ENCODE measurements at regions of chr21 and their contacts with region 1.

Region 1: DNA sequence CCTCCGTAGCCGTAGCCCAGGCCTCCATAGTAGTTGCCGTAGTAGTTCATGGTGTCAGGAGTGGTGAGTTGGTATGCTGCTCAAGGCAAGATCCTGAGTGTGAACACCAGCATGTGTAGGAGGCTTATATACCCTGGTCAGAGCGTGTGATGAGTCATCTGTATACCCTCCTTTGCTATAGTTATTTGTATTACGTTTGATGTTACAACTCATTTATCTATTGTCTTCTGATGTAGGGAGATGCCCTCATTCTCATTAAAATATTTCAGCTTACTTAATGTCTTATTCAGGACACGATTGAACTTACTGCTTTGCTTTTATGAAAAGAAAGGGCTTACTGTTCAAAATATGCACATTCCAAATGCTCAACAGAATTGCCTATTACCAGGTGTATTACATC is at the start of gene KRTAP19-5:
- DNase-seq: no peak
- ATAC-seq: no peak
- H3K4me3 ChIP-seq: no peak within 1 kb of the TSS
- H3K27ac ChIP-seq: no peak within 1 kb of the TSS
- H3K4me1 ChIP-seq: no peaks in the 10 kb centered on the region
- H3K27me3 ChIP-seq: no peaks in the 10 kb centered on the region
- CTCF ChIP-seq: no peak
- EP300 ChIP-seq: no peak
- POLR2A ChIP-seq: no peak
- RAD21 ChIP-seq: no peak
- polyA plus RNA-seq, gene KRTAP19-5: not detected

Region 2: DNA sequence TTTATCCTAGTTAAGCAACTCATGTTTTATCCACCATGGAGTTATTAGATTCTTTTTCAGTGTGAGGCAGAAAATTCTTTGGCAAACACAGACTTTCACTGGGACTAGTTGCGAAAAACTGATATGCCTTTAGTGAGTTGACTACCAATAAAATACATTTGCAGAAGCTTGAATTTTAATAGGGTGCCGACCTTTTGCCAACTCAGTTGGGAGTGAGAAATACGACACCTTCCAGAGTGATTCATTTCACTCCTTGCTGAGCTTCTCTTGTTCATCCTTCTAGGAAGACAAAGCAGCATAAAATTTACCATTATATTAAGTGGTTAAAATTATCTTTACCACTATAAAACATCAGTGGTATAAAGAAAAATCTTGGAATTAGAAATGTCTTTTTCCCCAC is 152.5 kb before region 1 on chr21:
- CTCF ChIA-PET with region 1: no interaction called
- POLR2A ChIA-PET with region 1: no interaction called
- RAD21 ChIA-PET with region 1: no interaction called
- SMC1A ChIA-PET with region 1: no interaction called
- in situ Hi-C with region 1: no loop called
- intact Hi-C with region 1: no loop called
- DNase-seq: no peak
- ATAC-seq: no peak
- H3K4me3 ChIP-seq: no peak overlapping the region
- H3K27ac ChIP-seq: no peak overlapping the region
- H3K4me1 ChIP-seq: no peaks in the 10 kb centered on the region
- H3K27me3 ChIP-seq: no peaks in the 10 kb centered on the region
- CTCF ChIP-seq: no peak
- EP300 ChIP-seq: no peak
- POLR2A ChIP-seq: no peak
- RAD21 ChIP-seq: no peak

Region 3: DNA sequence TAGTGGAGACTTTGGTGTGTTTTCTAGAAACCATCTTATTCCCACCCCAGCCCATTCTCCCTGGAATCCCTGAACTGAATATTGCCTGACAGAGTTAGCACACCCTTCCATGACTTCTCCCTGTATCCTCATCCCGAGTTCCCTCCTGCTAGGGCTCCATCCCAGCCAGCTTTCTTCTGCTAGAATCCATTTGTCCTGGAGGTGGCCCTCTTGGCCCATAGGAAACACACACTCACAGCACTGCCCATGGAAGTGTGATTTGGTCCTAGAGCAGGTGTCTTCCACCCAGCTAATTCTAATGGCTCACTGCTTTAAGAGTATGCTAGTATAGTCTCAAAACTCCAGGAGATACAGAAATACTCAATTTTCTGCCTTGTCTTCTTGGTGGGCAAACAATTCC is 57.8 kb before region 1 on chr21:
- CTCF ChIA-PET with region 1: no interaction called
- POLR2A ChIA-PET with region 1: no interaction called
- RAD21 ChIA-PET with region 1: no interaction called
- SMC1A ChIA-PET with region 1: no interaction called
- in situ Hi-C with region 1: no loop called
- intact Hi-C with region 1: loop called (anchors 10 kb)
- DNase-seq: no peak
- ATAC-seq: no peak
- H3K4me3 ChIP-seq: no peak overlapping the region
- H3K27ac ChIP-seq: no peak overlapping the region
- H3K4me1 ChIP-seq: no peaks in the 10 kb centered on the region
- H3K27me3 ChIP-seq: no peaks in the 10 kb centered on the region
- CTCF ChIP-seq: no peak
- EP300 ChIP-seq: no peak
- POLR2A ChIP-seq: no peak
- RAD21 ChIP-seq: no peak

Region 4: GRCh38 chr21:30733026-30733425 is 231.0 kb after region 1 on chr21:
- CTCF ChIA-PET with region 1: interaction called, 24 read pairs
- POLR2A ChIA-PET with region 1: no interaction called
- RAD21 ChIA-PET with region 1: interaction called, 5 read pairs
- SMC1A ChIA-PET with region 1: interaction called, 5 read pairs
- in situ Hi-C with region 1: no loop called
- intact Hi-C with region 1: no loop called
- DNase-seq: no peak
- ATAC-seq: no peak
- H3K4me3 ChIP-seq: no peak overlapping the region
- H3K27ac ChIP-seq: no peak overlapping the region
- H3K4me1 ChIP-seq: no peaks in the 10 kb centered on the region
- H3K27me3 ChIP-seq: no peaks in the 10 kb centered on the region
- CTCF ChIP-seq: no peak; a peak in 1 of 6 replicates
- EP300 ChIP-seq: no peak
- POLR2A ChIP-seq: no peak
- RAD21 ChIP-seq: no peak

Region 5: GRCh38 chr21:30847627-30848500 is 345.8 kb after region 1 on chr21:
- CTCF ChIA-PET with region 1: no interaction called
- POLR2A ChIA-PET with region 1: no interaction called
- RAD21 ChIA-PET with region 1: no interaction called
- SMC1A ChIA-PET with region 1: no interaction called
- in situ Hi-C with region 1: no loop called
- intact Hi-C with region 1: no loop called
- DNase-seq: no peak
- ATAC-seq: no peak
- H3K4me3 ChIP-seq: no peak overlapping the region
- H3K27ac ChIP-seq: no peak overlapping the region
- H3K4me1 ChIP-seq: no peaks in the 10 kb centered on the region
- H3K27me3 ChIP-seq: no peaks in the 10 kb centered on the region
- CTCF ChIP-seq: no peak
- EP300 ChIP-seq: no peak
- POLR2A ChIP-seq: no peak
- RAD21 ChIP-seq: no peak